B cell (primary cell): ENCODE measurements at regions of chr12 and their contacts with region 1.

Region 1: DNA sequence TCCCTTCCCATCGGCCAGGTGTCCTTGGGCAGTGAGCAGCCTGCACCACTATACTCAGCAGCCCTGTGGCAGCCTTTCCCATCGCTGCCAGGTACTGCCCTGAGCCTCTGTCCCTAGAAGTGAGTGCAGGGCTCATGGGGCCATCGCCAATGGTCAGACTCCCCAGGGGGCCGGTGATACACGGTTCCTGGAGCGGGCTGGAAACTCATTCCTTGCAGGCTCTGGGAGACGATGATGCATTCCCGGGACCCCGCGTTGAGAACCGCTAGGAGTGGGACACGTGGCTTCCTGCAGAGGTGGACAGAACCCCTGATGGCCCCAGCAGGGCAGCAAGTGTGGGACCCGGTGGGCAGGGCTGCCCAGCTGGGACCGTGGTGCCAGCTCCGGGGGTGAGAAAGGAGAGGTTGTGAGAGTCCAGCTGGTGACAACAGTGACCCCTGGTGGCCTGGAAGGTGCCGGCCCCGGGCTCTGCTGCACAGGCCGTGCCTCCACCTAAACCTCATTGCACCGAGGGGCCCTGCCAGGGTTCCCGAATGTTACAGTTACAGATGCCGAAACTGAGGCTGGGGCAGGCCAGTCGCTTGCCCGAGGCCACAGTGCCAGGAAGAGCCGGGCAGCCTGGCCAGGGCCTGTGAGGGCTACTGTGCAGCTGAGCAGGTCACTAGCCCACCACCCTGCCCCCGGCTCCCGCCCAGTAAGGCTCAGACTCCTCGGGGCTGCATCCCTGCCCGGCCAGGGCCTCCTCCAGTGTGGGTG is 33.8 kb downstream of the FBRSL1 start:
- DNase-seq: peak; percentile 82
- ATAC-seq: peak; percentile 79
- H3K4me3 ChIP-seq: no peak overlapping the region
- H3K4me3 Mint-ChIP-seq: no peak overlapping the region
- H3K27ac ChIP-seq: no peak overlapping the region
- H3K27ac Mint-ChIP-seq: no peak overlapping the region
- H3K4me1 ChIP-seq: peaks cover 5 to 12% of the 10 kb centered on the region in 2 donors
- H3K4me1 Mint-ChIP-seq: peaks cover 11% of the 10 kb centered on the region
- H3K27me3 ChIP-seq: no peaks in the 10 kb centered on the region
- H3K27me3 Mint-ChIP-seq: no peaks in the 10 kb centered on the region
- CTCF ChIP-seq: peak; percentile 90

Region 2: GRCh38 chr12:132429946-132430643 is 93.7 kb before region 1 on chr12:
- CTCF ChIA-PET with region 1: interaction called, 13 read pairs
- POLR2A ChIA-PET with region 1: no interaction called
- intact Hi-C with region 1: no loop called
- DNase-seq: peak; percentile 90
- ATAC-seq: peak; percentile 88
- H3K4me3 ChIP-seq: peak overlapping the region in 3 of 5 experiments; percentile 14 to 41 (median 18)
- H3K4me3 Mint-ChIP-seq: peak overlapping the region; percentile 78
- H3K27ac ChIP-seq: peak overlapping the region; percentile 35 to 37
- H3K27ac Mint-ChIP-seq: peak overlapping the region; percentile 82
- H3K4me1 ChIP-seq: peaks cover 60 to 70% of the 10 kb centered on the region in 2 donors
- H3K4me1 Mint-ChIP-seq: peaks cover 63% of the 10 kb centered on the region
- H3K27me3 ChIP-seq: no peaks in the 10 kb centered on the region
- H3K27me3 Mint-ChIP-seq: no peaks in the 10 kb centered on the region
- CTCF ChIP-seq: no peak

Region 3: DNA sequence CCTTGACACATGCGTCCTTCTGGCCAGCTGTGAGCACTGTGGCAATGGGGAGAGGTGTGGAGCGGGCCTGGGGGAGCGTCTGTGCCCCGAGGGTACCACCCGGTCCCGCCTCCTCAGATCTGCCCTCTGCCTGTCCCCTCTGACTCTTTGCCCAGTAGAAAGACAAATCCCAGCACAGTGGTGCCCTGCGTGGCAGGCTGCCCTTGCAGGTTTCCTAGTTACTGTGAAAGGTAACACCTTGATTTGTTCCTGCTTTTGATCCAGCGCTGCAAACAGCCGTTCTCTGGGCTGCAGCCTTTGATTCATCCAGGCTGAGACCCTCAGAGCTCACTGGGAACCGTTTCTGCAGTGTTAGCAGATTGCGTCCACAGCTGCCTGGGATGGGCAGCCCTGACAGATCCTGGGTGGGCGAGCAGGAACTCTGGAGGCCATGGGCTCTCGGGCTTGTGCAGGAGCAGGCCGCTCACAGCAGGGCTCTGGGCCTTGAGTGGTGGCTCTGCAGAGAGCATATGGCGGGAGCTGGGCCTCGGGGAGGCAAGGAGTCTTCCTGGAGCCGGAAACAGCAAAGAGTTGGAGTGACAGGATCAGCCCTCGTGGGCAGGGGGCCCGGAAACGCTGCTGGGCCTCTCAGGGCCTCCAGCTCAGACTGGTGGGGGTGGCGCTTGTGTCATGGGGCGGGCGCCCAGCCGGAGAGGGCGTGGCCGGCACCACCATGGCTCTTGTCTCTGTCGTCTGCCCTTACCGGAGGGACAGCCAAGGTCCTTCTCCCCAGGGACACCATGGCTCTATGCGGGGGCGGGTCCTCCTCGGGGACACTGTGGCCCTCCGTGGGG is 17.2 kb before region 1 on chr12:
- CTCF ChIA-PET with region 1: interaction called, 15 read pairs
- POLR2A ChIA-PET with region 1: no interaction called
- intact Hi-C with region 1: no loop called
- DNase-seq: peak; percentile 57
- ATAC-seq: peak; percentile 70
- H3K4me3 ChIP-seq: peak overlapping the region in 1 of 5 experiments; percentile 19
- H3K4me3 Mint-ChIP-seq: peak overlapping the region; percentile 57
- H3K27ac ChIP-seq: peak overlapping the region; percentile 18 to 37
- H3K27ac Mint-ChIP-seq: peak overlapping the region; percentile 59
- H3K4me1 ChIP-seq: peaks cover 43 to 53% of the 10 kb centered on the region in 2 donors
- H3K4me1 Mint-ChIP-seq: peaks cover 47% of the 10 kb centered on the region
- H3K27me3 ChIP-seq: peaks cover 0 to 14% (median 0%) of the 10 kb centered on the region in 4 experiments
- H3K27me3 Mint-ChIP-seq: no peaks in the 10 kb centered on the region
- CTCF ChIP-seq: no peak

Region 4: GRCh38 chr12:132560614-132561426 is 37.1 kb after region 1 on chr12:
- CTCF ChIA-PET with region 1: no interaction called
- POLR2A ChIA-PET with region 1: no interaction called
- intact Hi-C with region 1: loop called (anchors 1 kb)
- DNase-seq: peak; percentile 88
- ATAC-seq: peak; percentile 59
- H3K4me3 ChIP-seq: peak overlapping the region in 4 of 5 experiments; percentile 44 to 64 (median 58)
- H3K4me3 Mint-ChIP-seq: peak overlapping the region; percentile 83
- H3K27ac ChIP-seq: peak overlapping the region in 1 of 2 donors; percentile 18
- H3K27ac Mint-ChIP-seq: peak overlapping the region; percentile 67
- H3K4me1 ChIP-seq: peaks cover 27 to 35% of the 10 kb centered on the region in 2 donors
- H3K4me1 Mint-ChIP-seq: peaks cover 30% of the 10 kb centered on the region
- H3K27me3 ChIP-seq: no peaks in the 10 kb centered on the region
- H3K27me3 Mint-ChIP-seq: no peaks in the 10 kb centered on the region
- CTCF ChIP-seq: peak; percentile 83

Region 5: DNA sequence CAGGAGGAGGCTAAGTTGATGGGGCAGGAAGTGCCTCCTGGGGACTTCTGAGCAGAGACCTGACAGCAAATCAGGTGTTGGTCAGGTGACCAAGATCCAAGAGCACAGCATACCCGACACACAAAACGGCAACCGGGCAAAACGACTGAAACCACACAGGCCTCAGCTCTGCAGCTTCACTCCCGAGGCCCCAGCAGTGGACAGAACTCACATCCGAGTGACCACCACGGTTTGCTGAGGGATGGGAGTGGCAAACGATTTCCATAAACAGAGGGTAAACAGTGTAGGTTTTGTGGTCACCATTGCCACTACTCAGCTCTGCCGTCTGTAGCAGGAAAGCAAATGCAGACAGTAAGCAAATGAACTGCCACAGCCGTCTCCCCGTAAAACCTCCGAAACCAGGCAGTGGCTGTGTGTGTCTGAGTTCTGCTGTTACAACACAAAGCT is 349.2 kb after region 1 on chr12:
- CTCF ChIA-PET with region 1: no interaction called
- POLR2A ChIA-PET with region 1: no interaction called
- intact Hi-C with region 1: no loop called
- DNase-seq: no peak
- ATAC-seq: no peak
- H3K4me3 ChIP-seq: no peak overlapping the region
- H3K4me3 Mint-ChIP-seq: no peak overlapping the region
- H3K27ac ChIP-seq: no peak overlapping the region
- H3K27ac Mint-ChIP-seq: peak overlapping the region; percentile 59
- H3K4me1 ChIP-seq: no peaks in the 10 kb centered on the region
- H3K4me1 Mint-ChIP-seq: peaks cover 4% of the 10 kb centered on the region
- H3K27me3 ChIP-seq: no peaks in the 10 kb centered on the region
- H3K27me3 Mint-ChIP-seq: no peaks in the 10 kb centered on the region
- CTCF ChIP-seq: no peak